HCT116 (cell line): ENCODE measurements at regions of chr4 and their contacts with region 1.

Region 1: GRCh38 chr4:82462415-82462831 is 32.0 kb downstream of the ENOPH1 start:
- DNase-seq: peak; percentile 73
- ATAC-seq: peak; percentile 81
- H3K4me3 ChIP-seq: no peak overlapping the region
- H3K27ac ChIP-seq: no peak overlapping the region
- H3K4me1 ChIP-seq: no peaks in the 10 kb centered on the region
- H3K27me3 ChIP-seq: no peaks in the 10 kb centered on the region
- CTCF ChIP-seq: peak; percentile 44 to 76 (median 57); a peak in 4 of 6 replicates
- POLR2A ChIP-seq: no peak
- RAD21 ChIP-seq: peak; percentile 63

Region 2: DNA sequence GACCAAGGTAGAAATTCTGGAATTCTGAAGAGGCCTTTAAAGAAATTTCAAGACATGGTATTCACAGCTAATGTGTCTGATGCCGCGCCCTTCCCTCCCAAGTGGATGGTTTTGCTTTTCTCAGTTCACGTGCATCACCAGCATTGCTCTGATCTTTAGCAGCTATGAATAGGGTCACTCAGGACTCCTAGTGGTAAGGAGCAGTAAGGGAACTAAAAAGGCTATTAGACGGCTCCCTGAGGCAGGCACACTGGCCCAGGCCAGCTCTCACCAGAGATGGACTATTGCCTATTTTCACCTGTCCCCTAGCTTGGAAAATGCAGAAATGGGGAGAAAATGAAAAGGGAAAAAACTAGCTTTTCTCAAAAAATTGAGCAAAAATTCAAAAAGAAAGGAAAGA is 543.2 kb before region 1 on chr4:
- CTCF ChIA-PET with region 1: no interaction called
- POLR2A ChIA-PET with region 1: no interaction called
- RAD21 ChIA-PET with region 1: no interaction called
- intact Hi-C with region 1: no loop called
- DNase-seq: peak; percentile 12
- ATAC-seq: peak; percentile 97
- H3K4me3 ChIP-seq: no peak overlapping the region
- H3K27ac ChIP-seq: no peak overlapping the region
- H3K4me1 ChIP-seq: no peaks in the 10 kb centered on the region
- H3K27me3 ChIP-seq: peaks cover 27% of the 10 kb centered on the region
- CTCF ChIP-seq: peak in 2 of 3 experiments; percentile 49; a peak in 4 of 6 replicates
- POLR2A ChIP-seq: no peak
- RAD21 ChIP-seq: peak; percentile 15; the same call in 1 of the 2 replicates

Region 3: DNA sequence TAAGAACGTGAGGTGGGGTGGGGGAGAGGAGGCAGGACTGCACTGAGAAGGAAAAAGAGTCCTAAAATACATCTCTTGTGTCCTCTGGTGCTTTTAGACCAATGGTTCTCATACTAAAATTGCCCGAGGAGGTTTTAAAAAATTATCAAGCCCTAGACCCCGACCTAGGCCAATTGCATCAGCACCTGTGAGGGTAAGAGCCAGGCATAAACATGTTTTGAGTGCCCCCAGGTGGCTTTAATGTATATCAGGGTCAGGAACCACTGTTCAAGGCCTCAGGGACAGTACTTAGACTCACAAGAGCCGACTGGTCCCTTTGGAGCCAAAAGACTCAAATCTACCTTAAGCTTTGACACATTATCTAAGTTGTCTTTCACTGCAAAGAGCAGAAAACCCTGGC is 136.9 kb after region 1 on chr4:
- CTCF ChIA-PET with region 1: interaction called, 9 read pairs
- POLR2A ChIA-PET with region 1: no interaction called
- RAD21 ChIA-PET with region 1: interaction called in 1 of 2 experiments, 3 read pairs
- intact Hi-C with region 1: loop called (anchors 5 kb)
- DNase-seq: peak; percentile 1
- ATAC-seq: peak; percentile 72
- H3K4me3 ChIP-seq: no peak overlapping the region
- H3K27ac ChIP-seq: no peak overlapping the region
- H3K4me1 ChIP-seq: no peaks in the 10 kb centered on the region
- H3K27me3 ChIP-seq: 0 out of 2 replicates have a peak, but pooled peaks cover 10% of the 10 kb centered on the region
- CTCF ChIP-seq: 0 out of 6 replicates have a peak, but pooled peaks have one; percentile 7 to 19 (median 12)
- POLR2A ChIP-seq: no peak
- RAD21 ChIP-seq: peak; percentile 49

Region 4: DNA sequence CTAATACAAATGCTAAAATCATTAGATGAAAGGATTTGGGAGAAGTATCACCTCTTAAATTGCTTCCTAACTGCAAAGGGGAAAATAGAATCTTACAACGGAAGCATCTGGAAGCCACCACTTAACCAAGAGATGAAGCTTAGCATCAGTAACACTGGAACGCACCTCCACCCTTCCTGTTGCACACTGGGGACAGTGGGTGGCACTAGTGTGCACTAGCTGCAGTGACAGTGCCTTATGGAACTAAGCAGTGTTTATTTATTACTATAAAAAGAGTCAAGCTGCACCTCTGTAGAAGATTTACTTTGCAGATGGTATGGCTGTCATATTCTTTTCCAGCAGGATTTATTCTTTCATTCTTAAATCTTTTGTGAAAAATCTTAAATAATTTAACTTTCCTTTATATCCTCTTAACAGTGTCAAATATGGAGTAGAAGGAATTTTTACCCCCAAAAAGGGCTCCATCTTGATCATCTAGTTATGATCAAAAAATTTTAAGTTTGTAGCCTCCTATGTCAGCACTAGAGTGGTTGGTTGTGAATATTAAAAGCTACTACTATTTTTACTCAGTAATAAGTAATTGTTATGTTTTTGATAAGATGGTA is 259.5 kb after region 1 on chr4:
- CTCF ChIA-PET with region 1: interaction called, 11 read pairs
- POLR2A ChIA-PET with region 1: no interaction called
- RAD21 ChIA-PET with region 1: no interaction called
- intact Hi-C with region 1: no loop called
- DNase-seq: peak; percentile 10
- ATAC-seq: peak; percentile 99
- H3K4me3 ChIP-seq: no peak overlapping the region
- H3K27ac ChIP-seq: no peak overlapping the region
- H3K4me1 ChIP-seq: peaks cover 0 to 1% of the 10 kb centered on the region in 2 experiments; a peak in 1 of 4 replicates
- H3K27me3 ChIP-seq: no peaks in the 10 kb centered on the region
- CTCF ChIP-seq: peak; percentile 37 to 74 (median 63); a peak in 5 of 6 replicates
- POLR2A ChIP-seq: no peak
- RAD21 ChIP-seq: peak; percentile 60

Region 5: DNA sequence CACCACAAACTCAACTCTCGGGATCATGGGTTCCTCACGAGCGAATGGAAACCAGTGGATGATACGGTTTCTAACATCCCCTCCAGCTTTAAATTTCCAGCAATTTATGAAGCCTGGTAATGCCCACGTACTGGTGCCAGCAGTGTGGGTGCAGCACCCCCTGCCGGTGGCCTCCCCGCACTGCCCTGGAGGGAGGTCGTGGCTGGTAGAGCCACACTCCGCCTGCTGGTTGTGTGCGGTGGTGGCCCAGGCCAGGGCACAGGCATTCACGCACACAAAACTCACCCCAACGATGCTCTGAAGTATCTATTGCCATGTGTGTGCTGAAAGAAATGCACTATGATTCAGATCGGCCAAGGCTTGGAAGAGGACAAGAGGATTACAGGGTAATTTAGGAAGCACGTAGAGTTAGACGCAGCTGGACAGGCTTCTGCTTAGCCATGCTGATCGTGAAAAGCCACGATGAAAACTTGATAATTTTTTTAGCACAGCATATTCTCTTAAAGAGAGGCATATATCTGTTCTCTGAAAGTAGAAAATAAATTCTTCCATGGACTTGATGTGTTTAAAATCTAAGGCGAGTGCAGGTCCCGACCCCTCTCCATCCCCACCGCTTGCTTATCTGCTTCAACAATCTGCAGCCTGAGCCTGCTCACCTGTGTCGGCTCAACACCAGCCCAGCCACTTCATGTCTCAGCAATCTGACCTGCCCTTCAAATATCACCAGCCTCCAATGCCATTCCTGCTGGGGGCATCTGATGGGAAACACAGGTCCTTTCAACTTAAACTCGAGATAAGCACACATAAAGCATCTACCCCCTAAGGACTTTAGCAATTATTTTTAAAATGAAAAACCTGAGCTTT is 277.1 kb after region 1 on chr4:
- CTCF ChIA-PET with region 1: interaction called, 21 read pairs
- POLR2A ChIA-PET with region 1: no interaction called
- RAD21 ChIA-PET with region 1: no interaction called
- intact Hi-C with region 1: loop called (anchors 1 kb)
- DNase-seq: peak; percentile 31
- ATAC-seq: peak; percentile 100
- H3K4me3 ChIP-seq: no peak overlapping the region
- H3K27ac ChIP-seq: no peak overlapping the region
- H3K4me1 ChIP-seq: peaks cover 3 to 9% of the 10 kb centered on the region in 2 experiments; a peak in 2 of 4 replicates
- H3K27me3 ChIP-seq: no peaks in the 10 kb centered on the region
- CTCF ChIP-seq: peak; percentile 98 to 100 (median 100)
- POLR2A ChIP-seq: no peak
- RAD21 ChIP-seq: peak; percentile 89

Region 6: DNA sequence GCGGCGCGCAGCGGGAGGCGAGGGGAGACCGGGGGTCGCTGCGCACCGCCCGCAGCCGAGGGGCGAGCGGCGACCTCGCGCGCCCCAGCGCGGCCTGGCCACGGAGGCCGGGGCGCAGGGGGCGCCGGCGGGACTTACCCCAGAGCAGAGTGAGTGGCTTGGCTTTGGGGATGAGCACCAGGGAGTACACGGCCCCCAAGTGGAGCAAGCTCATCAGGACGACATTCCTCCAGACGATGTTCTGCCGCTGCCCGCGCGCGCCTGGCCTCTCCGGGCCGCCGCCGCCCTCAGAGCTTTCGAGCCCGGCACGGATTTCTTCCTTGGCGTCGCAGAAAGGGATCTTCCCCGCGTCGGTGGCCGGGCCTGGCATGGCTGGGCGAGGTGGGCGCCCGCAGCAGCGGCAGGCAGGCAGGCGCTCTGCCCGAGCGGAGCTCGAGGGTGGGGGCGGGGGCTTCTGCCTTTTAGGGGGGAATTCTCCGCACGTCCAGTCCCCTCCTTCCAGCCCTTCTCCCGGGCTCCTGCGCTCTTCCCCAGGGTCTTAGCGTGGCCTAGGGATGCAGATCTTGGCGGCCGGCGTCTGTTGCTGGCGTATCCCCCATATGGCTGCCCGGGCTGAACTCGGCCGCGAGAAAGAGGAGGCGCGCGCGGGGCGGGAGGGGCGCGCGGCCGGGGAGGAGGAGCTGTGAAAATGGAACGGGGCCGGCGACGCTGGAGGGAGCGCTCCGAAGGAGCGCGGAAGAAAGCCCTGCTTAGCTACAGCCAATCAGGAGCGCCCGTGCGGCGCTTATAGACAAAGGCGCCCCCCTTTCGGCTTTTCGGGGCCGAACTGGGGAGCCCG is 336.0 kb after region 1 on chr4 and contains the start of gene SCD5:
- CTCF ChIA-PET with region 1: no interaction called
- POLR2A ChIA-PET with region 1: no interaction called
- RAD21 ChIA-PET with region 1: interaction called, 3 to 5 read pairs
- intact Hi-C with region 1: loop called (anchors 1 kb)
- DNase-seq: peak; percentile 55
- ATAC-seq: peak; percentile 94
- H3K4me3 ChIP-seq: peak within 1 kb of the TSS; percentile 64 to 80
- H3K27ac ChIP-seq: peak within 1 kb of the TSS; percentile 15; the same call in 1 of the 2 replicates
- H3K4me1 ChIP-seq: peaks cover 13 to 25% of the 10 kb centered on the region in 2 experiments; a peak in 3 of 4 replicates
- H3K27me3 ChIP-seq: no peaks in the 10 kb centered on the region
- CTCF ChIP-seq: no peak
- POLR2A ChIP-seq: no peak
- RAD21 ChIP-seq: no peak
- total RNA-seq, gene SCD5: 21.7 TPM

Region 7: DNA sequence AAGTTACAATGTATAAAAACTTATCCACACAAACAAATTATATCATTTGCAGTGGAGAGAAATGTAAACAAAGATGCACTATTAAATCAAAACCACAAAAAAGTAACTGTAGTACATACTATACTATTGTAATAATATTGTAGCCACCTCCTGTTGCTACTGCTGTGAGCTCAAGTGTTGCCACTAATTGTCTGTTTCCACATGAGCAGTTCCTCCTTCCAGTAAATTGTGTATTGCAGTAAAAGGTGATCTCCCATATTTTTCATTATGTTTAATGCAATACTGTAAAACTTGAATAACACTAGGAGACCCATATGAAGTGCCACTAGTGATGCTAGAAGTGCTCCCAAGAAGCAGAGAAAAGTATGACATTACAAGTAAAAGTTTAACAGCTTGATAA is 536.5 kb after region 1 on chr4:
- CTCF ChIA-PET with region 1: no interaction called
- POLR2A ChIA-PET with region 1: no interaction called
- RAD21 ChIA-PET with region 1: no interaction called
- intact Hi-C with region 1: no loop called
- DNase-seq: no peak
- ATAC-seq: no peak
- H3K4me3 ChIP-seq: no peak overlapping the region
- H3K27ac ChIP-seq: no peak overlapping the region
- H3K4me1 ChIP-seq: peaks cover 0 to 5% of the 10 kb centered on the region in 2 experiments; a peak in 1 of 4 replicates
- H3K27me3 ChIP-seq: no peaks in the 10 kb centered on the region
- CTCF ChIP-seq: no peak
- POLR2A ChIP-seq: no peak
- RAD21 ChIP-seq: no peak

Region 8: GRCh38 chr4:83284193-83285054 is 822.0 kb after region 1 on chr4 and contains the start of gene COQ2:
- CTCF ChIA-PET with region 1: interaction called, 10 read pairs
- POLR2A ChIA-PET with region 1: no interaction called
- RAD21 ChIA-PET with region 1: no interaction called
- intact Hi-C with region 1: loop called (anchors 2 kb)
- DNase-seq: peak; percentile 79
- ATAC-seq: peak; percentile 91
- H3K4me3 ChIP-seq: peak within 1 kb of the TSS; percentile 63 to 66
- H3K27ac ChIP-seq: peak within 1 kb of the TSS; percentile 90
- H3K4me1 ChIP-seq: peaks cover 6 to 27% of the 10 kb centered on the region in 2 experiments; a peak in 3 of 4 replicates
- H3K27me3 ChIP-seq: no peaks in the 10 kb centered on the region
- CTCF ChIP-seq: peak in 1 of 3 experiments; percentile 8; a peak in 1 of 6 replicates
- POLR2A ChIP-seq: peak; percentile 72
- RAD21 ChIP-seq: no peak
- total RNA-seq, gene COQ2: 20.6 TPM